ENCODE measurements at regions of chr22 and their contacts with region 1.

Region 1: GRCh38 chr22:17945888-17946648 is 78.3 kb downstream of the MICAL3 start:
- DNase-seq: no peak
- ATAC-seq: no peak

Region 2: GRCh38 chr22:18001040-18001893 is 55.2 kb after region 1 on chr22:
- intact Hi-C with region 1: loop called in 1 of 2 experiments (anchors 10 kb)
- DNase-seq: peak; percentile 91
- ATAC-seq: peak; percentile 96 to 98

Region 3: GRCh38 chr22:18021431-18021830 is 75.4 kb after region 1 on chr22:
- intact Hi-C with region 1: no loop called
- DNase-seq: no peak
- ATAC-seq: no peak

Measured in left cardiac atrium (tissue), 4 donors.